GM12878 (cell line): ENCODE measurements at regions of chr22 and their contacts with region 1.

Region 1: GRCh38 chr22:31537019-31537535 is 40.7 kb downstream of the SFI1 start:
- DNase-seq: peak; percentile 79
- ATAC-seq: peak; percentile 91
- H3K4me3 ChIP-seq: no peak overlapping the region
- H3K27ac ChIP-seq: peak overlapping the region; percentile 87
- H3K4me1 ChIP-seq: peaks cover 34% of the 10 kb centered on the region
- H3K27me3 ChIP-seq: no peaks in the 10 kb centered on the region
- CTCF ChIP-seq: no peak
- EP300 ChIP-seq: peak; percentile 82 to 88; a peak in 3 of 4 replicates
- POLR2A ChIP-seq: no peak
- RAD21 ChIP-seq: no peak

Region 2: DNA sequence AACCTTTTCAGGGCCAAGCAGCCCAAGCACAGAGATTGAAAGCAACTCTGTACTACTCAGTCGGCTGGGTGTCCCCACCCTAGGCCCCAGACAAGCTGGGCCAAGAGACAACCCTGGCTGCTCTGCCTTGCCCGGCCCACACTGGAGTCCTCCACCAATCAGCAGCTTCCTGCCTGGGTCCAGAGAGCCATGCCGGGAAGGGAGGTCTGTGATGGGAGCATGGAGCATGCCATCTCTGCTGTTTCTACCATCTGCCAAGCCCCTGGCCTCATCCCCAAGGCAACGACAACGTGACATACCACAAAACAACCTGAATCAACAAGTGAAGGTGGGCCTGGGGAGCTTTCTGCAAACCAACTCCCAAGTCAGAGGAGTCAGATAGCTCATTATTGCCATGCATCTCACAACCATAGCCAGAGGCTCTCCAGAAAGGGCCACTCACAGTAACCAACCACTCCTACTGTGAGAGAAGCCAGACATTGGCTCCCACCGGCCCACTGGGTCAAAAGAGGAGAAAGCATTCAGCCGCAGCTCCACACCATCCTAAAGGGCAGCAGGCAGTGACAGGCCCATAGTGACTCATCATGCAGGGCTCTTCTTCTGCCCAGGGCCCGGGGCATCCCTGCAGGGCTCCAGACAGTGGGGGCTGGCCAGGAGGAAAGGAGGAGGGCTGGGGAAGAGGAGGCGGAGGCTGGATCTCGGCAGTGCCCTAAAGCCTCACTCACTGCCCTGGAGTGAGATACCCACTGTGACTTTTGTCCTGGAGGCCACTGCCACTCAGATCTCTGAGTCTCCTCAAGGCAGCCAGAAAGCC is 209.0 kb before region 1 on chr22:
- CTCF ChIA-PET with region 1: no interaction called
- POLR2A ChIA-PET with region 1: no interaction called
- RAD21 ChIA-PET with region 1: no interaction called
- SMC1A ChIA-PET with region 1: no interaction called
- in situ Hi-C with region 1: no loop called
- intact Hi-C with region 1: no loop called
- DNase-seq: no peak
- ATAC-seq: no peak
- H3K4me3 ChIP-seq: no peak overlapping the region
- H3K27ac ChIP-seq: no peak overlapping the region
- H3K4me1 ChIP-seq: no peaks in the 10 kb centered on the region
- H3K27me3 ChIP-seq: no peaks in the 10 kb centered on the region
- CTCF ChIP-seq: no peak
- EP300 ChIP-seq: no peak
- POLR2A ChIP-seq: no peak
- RAD21 ChIP-seq: no peak

Region 3: GRCh38 chr22:31520051-31520450 is 17.0 kb before region 1 on chr22:
- CTCF ChIA-PET with region 1: interaction called, 3 read pairs
- POLR2A ChIA-PET with region 1: interaction called, 19 read pairs
- RAD21 ChIA-PET with region 1: interaction called, 3 read pairs
- SMC1A ChIA-PET with region 1: interaction called, 16 read pairs
- in situ Hi-C with region 1: no loop called
- intact Hi-C with region 1: no loop called
- DNase-seq: no peak
- ATAC-seq: peak; percentile 71
- H3K4me3 ChIP-seq: no peak overlapping the region
- H3K27ac ChIP-seq: no peak overlapping the region; the same call in 1 of the 2 replicates
- H3K4me1 ChIP-seq: no peaks in the 10 kb centered on the region
- H3K27me3 ChIP-seq: no peaks in the 10 kb centered on the region
- CTCF ChIP-seq: no peak
- EP300 ChIP-seq: no peak
- POLR2A ChIP-seq: no peak
- RAD21 ChIP-seq: no peak